Aorta (tissue), 5 donors: ENCODE measurements at regions of chr13 and their contacts with region 1.

Region 1: DNA sequence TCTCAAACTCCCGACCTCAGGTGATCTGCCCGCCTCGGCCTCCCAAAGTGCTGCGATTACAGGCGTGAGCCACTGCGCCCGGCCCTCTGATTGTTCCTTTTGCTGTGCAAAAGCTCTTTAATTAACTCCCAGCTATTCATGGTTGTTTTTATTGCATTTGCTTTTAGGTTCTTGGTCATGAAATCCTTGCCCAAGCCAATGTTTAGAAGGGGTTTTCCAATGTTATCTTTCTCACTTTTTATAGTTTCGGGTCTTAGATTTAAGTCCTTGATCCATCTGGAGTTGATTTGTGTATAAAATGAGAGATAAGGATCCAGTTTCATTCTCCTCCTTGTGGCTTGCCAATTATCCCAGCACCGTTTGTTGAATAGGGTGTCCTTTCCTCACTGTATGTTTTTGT is 19.2 kb upstream of the GRTP1 start:
- DNase-seq: no peak
- ATAC-seq: no peak
- H3K4me3 ChIP-seq: no peak overlapping the region
- H3K27ac ChIP-seq: no peak overlapping the region
- H3K4me1 ChIP-seq: no peaks in the 10 kb centered on the region
- H3K27me3 ChIP-seq: no peaks in the 10 kb centered on the region

Region 2: GRCh38 chr13:112689303-112690165 is 693.6 kb before region 1 on chr13 and contains the start of gene ATP11A:
- intact Hi-C with region 1: loop called in 1 of 2 experiments (anchors 10 kb)
- DNase-seq: peak; percentile 96 to 97
- ATAC-seq: peak; percentile 95
- H3K4me3 ChIP-seq: peak within 1 kb of the TSS; percentile 66 to 92
- H3K27ac ChIP-seq: peak within 1 kb of the TSS in 1 of 2 donors; percentile 30
- H3K4me1 ChIP-seq: no peaks in the 10 kb centered on the region
- H3K27me3 ChIP-seq: no peaks in the 10 kb centered on the region
- total RNA-seq, gene ATP11A: 45.7 to 68.1 TPM